HCT116 (cell line): ENCODE measurements at regions of chr10 and their contacts with region 1.

Region 1: DNA sequence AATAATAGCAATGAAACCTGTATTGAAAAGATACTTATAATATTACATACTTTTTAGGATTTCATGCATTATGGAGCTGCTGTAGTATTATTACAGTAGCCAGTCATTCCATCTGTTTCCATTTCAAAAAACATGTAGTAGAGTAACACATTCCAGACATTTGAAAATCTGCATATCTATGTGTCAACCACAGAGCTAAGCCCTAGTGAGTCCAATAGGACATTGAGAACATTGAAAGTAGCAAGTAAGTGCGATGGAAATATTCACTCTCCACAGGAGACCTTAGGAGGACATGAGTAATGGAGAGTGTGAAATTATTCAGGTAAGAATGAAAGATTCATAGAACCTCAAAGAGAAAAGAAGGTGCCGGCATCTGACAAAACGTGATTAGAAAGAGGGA is 15.3 kb downstream of the NSMCE4A start:
- DNase-seq: no peak
- ATAC-seq: no peak
- H3K4me3 ChIP-seq: no peak overlapping the region
- H3K27ac ChIP-seq: no peak overlapping the region
- H3K4me1 ChIP-seq: no peaks in the 10 kb centered on the region; a peak in 1 of 4 replicates
- H3K27me3 ChIP-seq: no peaks in the 10 kb centered on the region
- CTCF ChIP-seq: no peak
- POLR2A ChIP-seq: no peak
- RAD21 ChIP-seq: no peak

Region 2: GRCh38 chr10:121886997-121887622 is 72.6 kb before region 1 on chr10:
- CTCF ChIA-PET with region 1: no interaction called
- POLR2A ChIA-PET with region 1: no interaction called
- RAD21 ChIA-PET with region 1: no interaction called
- intact Hi-C with region 1: no loop called
- DNase-seq: peak; percentile 60
- ATAC-seq: peak; percentile 96
- H3K4me3 ChIP-seq: no peak overlapping the region
- H3K27ac ChIP-seq: no peak overlapping the region
- H3K4me1 ChIP-seq: no peaks in the 10 kb centered on the region
- H3K27me3 ChIP-seq: no peaks in the 10 kb centered on the region
- CTCF ChIP-seq: peak; percentile 80 to 98 (median 92)
- POLR2A ChIP-seq: no peak
- RAD21 ChIP-seq: peak; percentile 88

Region 3: DNA sequence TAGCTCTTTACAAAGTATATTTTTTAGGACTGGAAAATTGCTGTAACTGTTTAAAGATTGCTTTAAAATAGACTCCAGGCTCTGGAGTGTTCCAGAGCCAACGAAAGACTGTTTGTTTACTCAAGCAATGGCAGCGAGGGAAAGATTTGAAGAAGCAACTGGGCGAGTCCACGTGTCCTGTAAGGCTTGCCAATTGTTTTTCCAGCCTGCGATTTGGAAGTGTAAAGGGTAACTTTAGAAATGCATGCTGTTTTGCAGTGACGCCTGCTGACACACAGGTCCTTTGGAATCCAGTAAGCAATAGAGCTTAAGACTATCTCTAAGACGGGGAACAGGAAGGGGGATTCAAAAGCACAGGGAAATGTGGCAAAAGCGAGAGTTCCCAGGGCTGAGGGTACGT is 85.0 kb after region 1 on chr10:
- CTCF ChIA-PET with region 1: no interaction called
- POLR2A ChIA-PET with region 1: no interaction called
- RAD21 ChIA-PET with region 1: no interaction called
- intact Hi-C with region 1: loop called (anchors 1 kb)
- DNase-seq: no peak
- ATAC-seq: no peak
- H3K4me3 ChIP-seq: peak overlapping the region in 1 of 2 experiments; percentile 5; a peak in 1 of 4 replicates
- H3K27ac ChIP-seq: no peak overlapping the region
- H3K4me1 ChIP-seq: peaks cover 15 to 20% of the 10 kb centered on the region in 2 experiments
- H3K27me3 ChIP-seq: no peaks in the 10 kb centered on the region
- CTCF ChIP-seq: no peak
- POLR2A ChIP-seq: no peak
- RAD21 ChIP-seq: no peak